ENCODE measurements at regions of chr21 and their contacts with region 1.

Region 1: DNA sequence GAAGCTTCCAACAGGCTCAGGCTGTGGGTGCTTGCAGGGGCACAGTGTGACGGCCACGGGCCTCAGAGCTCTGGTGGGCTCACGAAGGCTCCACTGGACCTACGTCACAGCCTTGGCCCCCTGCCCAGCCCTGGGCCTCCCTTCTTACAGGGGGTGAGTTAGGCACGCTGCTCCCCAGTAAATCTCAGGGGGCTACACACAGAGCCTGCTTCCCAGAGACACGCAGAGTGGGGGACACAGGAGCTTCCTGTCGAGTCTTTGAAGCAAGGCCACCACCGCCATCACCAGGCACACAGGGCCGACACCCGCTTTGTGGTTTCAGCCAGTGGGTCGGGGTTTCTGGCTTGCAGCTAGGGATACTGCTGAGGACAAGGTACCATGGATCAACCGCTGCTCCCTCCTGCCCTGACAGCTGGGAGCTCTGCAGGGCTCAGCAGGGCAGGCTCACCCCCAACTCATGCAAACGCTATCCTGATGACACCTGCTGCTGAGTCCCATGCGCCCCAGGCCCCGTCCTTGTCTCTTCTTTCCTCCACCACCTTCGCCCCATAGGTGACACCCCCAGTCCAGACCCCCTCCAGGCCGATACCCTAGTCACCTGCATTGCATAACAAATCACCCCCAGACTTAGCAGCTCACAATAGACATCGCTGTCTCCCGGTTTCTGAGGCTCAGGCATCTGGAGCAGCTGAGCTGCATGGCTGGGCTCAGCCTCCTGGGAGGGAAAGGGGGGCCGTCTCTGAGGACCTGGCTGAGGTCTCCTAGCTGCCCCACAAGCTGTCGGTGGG is 5.5 kb upstream of the CFAP410 start:
- DNase-seq: peak; percentile 64
- ATAC-seq: no peak

Region 2: DNA sequence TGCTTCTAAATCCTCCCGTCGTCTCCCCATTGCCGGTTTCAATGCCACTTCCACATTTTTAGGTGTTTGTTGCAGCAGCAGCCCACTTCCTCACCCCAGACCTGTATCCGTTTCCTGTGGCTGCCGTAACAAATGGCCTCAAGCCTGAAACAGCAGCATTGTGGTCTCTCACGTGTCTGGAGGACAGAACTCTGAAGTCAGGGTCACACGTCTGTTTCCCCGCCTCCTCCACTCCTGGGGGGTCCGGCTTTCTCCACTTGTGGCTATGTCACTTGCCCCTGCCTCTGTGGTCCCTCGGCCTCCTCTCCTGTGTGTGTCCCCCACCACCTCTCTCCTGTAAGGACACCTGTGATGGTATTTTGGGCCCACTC is 30.5 kb after region 1 on chr21:
- intact Hi-C with region 1: loop called (anchors 2 kb)
- DNase-seq: peak; percentile 61
- ATAC-seq: peak; percentile 50